Dendritic cell treated with granulocyte-macrophage colony-stimulating factor and Interleukin-4, amounts not matched to agents 40 ng/mL and 50 ng/mL, for 4 days (primary cell): ENCODE measurements at regions of chr1 and their contacts with region 1.

Region 1: GRCh38 chr1:6784560-6785317 is 515 bp upstream of the CAMTA1 start:
- H3K4me3 Mint-ChIP-seq: peak overlapping the region; percentile 92
- H3K27ac Mint-ChIP-seq: peak overlapping the region; percentile 98
- H3K4me1 Mint-ChIP-seq: peaks cover 43% of the 10 kb centered on the region
- H3K27me3 Mint-ChIP-seq: no peaks in the 10 kb centered on the region

Region 2: GRCh38 chr1:6646499-6647148 is 138.1 kb before region 1 on chr1:
- intact Hi-C with region 1: no loop called
- H3K4me3 Mint-ChIP-seq: no peak overlapping the region
- H3K27ac Mint-ChIP-seq: no peak overlapping the region
- H3K4me1 Mint-ChIP-seq: no peaks in the 10 kb centered on the region
- H3K27me3 Mint-ChIP-seq: no peaks in the 10 kb centered on the region

Region 3: GRCh38 chr1:6743189-6744101 is 41.3 kb before region 1 on chr1:
- intact Hi-C with region 1: loop called (anchors 5 kb)
- H3K4me3 Mint-ChIP-seq: peak overlapping the region; percentile 53
- H3K27ac Mint-ChIP-seq: peak overlapping the region; percentile 93
- H3K4me1 Mint-ChIP-seq: peaks cover 39% of the 10 kb centered on the region
- H3K27me3 Mint-ChIP-seq: no peaks in the 10 kb centered on the region